ENCODE measurements at regions of chr4 and their contacts with region 1.

Region 1: GRCh38 chr4:76892621-76893020 is 5.3 kb downstream of the SOWAHB start:
- DNase-seq: no peak
- H3K4me3 ChIP-seq: no peak overlapping the region
- CTCF ChIP-seq: no peak

Region 2: GRCh38 chr4:76850010-76850441 is 42.6 kb before region 1 on chr4:
- in situ Hi-C with region 1: loop called (anchors 5 kb)
- DNase-seq: peak; percentile 96
- H3K4me3 ChIP-seq: no peak overlapping the region
- CTCF ChIP-seq: no peak